GM10248 (cell line): ENCODE measurements at regions of chr3 and their contacts with region 1.

Region 1: DNA sequence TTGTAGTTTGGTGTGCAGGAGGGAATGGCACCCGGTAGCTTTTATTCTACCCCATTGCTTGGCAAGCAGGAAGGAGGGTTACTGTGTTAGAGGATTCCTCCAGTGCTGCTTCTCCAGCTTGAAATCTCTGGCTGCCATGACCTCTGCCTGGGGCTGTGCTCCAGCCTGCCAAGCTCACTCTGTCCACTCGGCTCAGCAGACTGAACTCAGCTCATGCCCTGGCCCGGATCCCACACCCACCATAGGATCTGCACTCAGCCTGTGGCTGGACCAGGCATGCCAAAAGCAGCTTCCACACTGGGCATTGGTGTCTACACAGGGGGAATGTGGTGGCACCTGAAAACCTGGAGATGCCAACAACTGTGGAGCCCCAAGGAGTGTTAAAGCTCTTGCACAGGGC is 26.3 kb downstream of the CLDN16 start:
- DNase-seq: no peak
- CTCF ChIP-seq: no peak

Region 2: DNA sequence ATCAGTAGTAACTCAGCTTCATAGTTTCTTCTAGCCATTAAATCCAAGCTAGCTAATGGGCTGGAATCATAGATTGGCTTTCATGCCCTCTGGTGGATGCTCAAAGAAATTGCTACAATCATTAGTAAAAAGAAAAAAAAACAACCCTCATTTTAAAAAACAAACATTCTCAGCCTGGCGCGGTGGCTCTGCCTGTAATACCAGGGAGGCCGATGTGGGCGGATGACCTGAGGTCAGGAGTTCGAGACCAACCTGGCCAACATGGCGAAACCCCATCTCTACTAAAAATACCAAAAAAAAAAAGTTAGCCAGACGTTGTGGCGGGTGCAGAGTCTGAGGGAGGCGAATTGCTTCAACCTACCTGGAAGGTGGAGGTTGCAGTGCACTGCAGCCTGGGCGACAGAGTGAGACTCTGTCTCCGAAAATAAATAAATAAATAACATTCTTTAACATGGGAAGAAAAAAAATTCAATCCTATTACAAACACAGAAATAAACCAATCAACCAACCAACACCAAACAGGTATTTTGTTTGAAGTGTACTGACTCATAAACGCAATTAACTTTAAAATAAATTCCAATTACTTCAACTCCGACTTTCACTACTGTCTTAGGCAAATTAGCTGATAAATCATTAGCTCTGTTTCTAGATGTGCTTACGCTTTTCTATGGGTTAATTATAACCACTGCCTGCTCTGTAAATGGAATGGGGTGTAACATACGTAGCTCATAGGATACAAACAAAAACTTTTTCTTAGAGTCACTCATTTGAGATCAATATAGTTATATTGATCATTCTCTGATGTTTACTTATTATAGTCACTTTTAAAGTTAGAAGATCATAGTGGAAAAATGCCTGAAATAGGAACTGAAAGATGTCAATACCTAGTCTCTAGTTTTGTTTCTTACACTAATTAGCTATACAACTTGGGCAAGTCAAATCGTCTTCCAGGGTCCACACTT is 10.5 kb after region 1 on chr3:
- CTCF ChIA-PET with region 1: interaction called, 16 read pairs
- POLR2A ChIA-PET with region 1: no interaction called
- DNase-seq: peak; percentile 35
- CTCF ChIP-seq: peak; percentile 50